ENCODE measurements at regions of chr14 and their contacts with region 1.

Region 1: GRCh38 chr14:75487155-75487671 is 35.1 kb upstream of the BATF start:
- DNase-seq: peak; percentile 75
- H3K4me3 Mint-ChIP-seq: peak overlapping the region; percentile 22
- H3K27ac Mint-ChIP-seq: peak overlapping the region; percentile 65
- H3K4me1 Mint-ChIP-seq: peaks cover 27% of the 10 kb centered on the region
- H3K27me3 Mint-ChIP-seq: peaks cover 2% of the 10 kb centered on the region

Region 2: DNA sequence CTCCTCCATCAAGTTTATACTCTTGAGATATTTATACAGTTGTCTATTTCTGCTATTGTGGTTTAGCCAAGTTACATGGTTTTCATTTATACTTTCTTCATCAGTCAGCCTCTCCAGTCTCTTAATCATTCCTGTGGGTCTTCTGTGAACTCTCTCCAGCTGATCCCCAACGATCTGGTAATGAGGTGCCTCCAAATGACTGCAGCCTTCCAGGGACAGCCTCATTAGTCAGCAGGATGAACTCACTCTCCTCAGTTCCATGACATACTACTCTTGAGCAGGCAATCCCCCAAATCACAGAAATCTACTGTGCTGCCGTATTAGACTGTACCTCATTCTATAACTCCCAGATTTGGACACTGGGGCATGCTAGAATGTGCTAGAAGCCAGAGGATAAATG is 789.7 kb before region 1 on chr14:
- intact Hi-C with region 1: no loop called
- DNase-seq: no peak
- H3K4me3 Mint-ChIP-seq: no peak overlapping the region
- H3K27ac Mint-ChIP-seq: no peak overlapping the region
- H3K4me1 Mint-ChIP-seq: peaks cover 8% of the 10 kb centered on the region
- H3K27me3 Mint-ChIP-seq: no peaks in the 10 kb centered on the region

Region 3: DNA sequence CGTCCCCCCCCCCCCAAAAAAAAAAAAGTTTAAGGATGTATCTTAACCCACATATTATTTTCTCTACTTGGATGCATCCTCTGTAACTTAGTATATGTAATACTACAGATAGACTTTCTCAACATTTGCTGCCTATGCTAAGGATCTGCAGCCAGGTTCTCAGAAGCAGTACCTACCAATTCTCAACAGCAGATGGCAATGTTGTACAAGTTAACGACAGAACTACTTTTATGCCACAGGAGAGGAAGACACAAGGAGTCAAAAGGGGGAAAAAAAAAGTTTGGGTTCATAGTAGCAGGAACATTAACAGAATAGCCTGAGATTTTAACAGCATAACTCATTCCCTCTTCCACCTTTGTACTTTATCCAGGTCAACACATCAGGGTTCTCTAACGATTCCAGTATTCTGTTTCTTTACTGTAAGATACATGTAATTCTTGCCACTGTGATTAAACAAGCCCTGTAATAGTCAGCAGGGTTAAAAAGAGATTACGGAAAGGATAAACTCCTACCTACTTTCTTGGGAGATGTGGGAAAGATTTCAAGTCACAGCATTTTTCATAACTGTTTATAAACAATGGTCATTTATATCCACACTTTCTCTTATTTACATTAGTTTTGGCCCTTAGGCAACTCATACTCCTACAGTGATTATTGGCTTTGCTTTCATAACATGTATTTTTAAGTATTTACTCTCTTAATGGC is 354.7 kb before region 1 on chr14:
- intact Hi-C with region 1: loop called (anchors 1 kb)
- DNase-seq: peak; percentile 91
- H3K4me3 Mint-ChIP-seq: no peak overlapping the region
- H3K27ac Mint-ChIP-seq: no peak overlapping the region
- H3K4me1 Mint-ChIP-seq: peaks cover 13% of the 10 kb centered on the region
- H3K27me3 Mint-ChIP-seq: no peaks in the 10 kb centered on the region

Region 4: GRCh38 chr14:75333606-75334548 is 153.3 kb before region 1 on chr14:
- intact Hi-C with region 1: loop called (anchors 10 kb)
- DNase-seq: peak; percentile 88
- H3K4me3 Mint-ChIP-seq: peak overlapping the region; percentile 82
- H3K27ac Mint-ChIP-seq: peak overlapping the region; percentile 89
- H3K4me1 Mint-ChIP-seq: peaks cover 22% of the 10 kb centered on the region
- H3K27me3 Mint-ChIP-seq: peaks cover 17% of the 10 kb centered on the region

Measured in activated CD4-positive, alpha-beta T cell treated with anti-CD3 and anti-CD28 coated beads, Interleukin-2, amount 10 ng/mL, durations not matched to agents 24 days and 14 days (primary cell).